Panc1 (cell line): ENCODE measurements at regions of chr7 and their contacts with region 1.

Region 1: GRCh38 chr7:100705753-100706671 is at the start of gene POP7:
- DNase-seq: peak; percentile 92
- ATAC-seq: peak; percentile 98
- H3K4me3 ChIP-seq: peak within 1 kb of the TSS; percentile 83 to 86
- H3K27ac ChIP-seq: peak within 1 kb of the TSS; percentile 84
- H3K4me1 ChIP-seq: peaks cover 13% of the 10 kb centered on the region; the same call in 1 of the 2 replicates
- H3K27me3 ChIP-seq: no peaks in the 10 kb centered on the region
- CTCF ChIP-seq: no peak
- total RNA-seq, gene POP7: 52.3 TPM

Region 2: GRCh38 chr7:100632951-100633717 is 72.9 kb before region 1 on chr7:
- CTCF ChIA-PET with region 1: interaction called, 12 read pairs
- POLR2A ChIA-PET with region 1: no interaction called
- in situ Hi-C with region 1: no loop called
- intact Hi-C with region 1: no loop called
- DNase-seq: no peak
- ATAC-seq: peak; percentile 85
- H3K4me3 ChIP-seq: peak overlapping the region; percentile 59 to 62
- H3K27ac ChIP-seq: peak overlapping the region; percentile 76
- H3K4me1 ChIP-seq: no peaks in the 10 kb centered on the region
- H3K27me3 ChIP-seq: no peaks in the 10 kb centered on the region
- CTCF ChIP-seq: peak; percentile 74

Region 3: GRCh38 chr7:100692578-100692961 is 13.4 kb before region 1 on chr7:
- CTCF ChIA-PET with region 1: interaction called, 10 read pairs
- POLR2A ChIA-PET with region 1: interaction called, 7 read pairs
- in situ Hi-C with region 1: no loop called
- intact Hi-C with region 1: no loop called
- DNase-seq: no peak
- ATAC-seq: no peak
- H3K4me3 ChIP-seq: peak overlapping the region; percentile 84 to 91
- H3K27ac ChIP-seq: peak overlapping the region; percentile 94
- H3K4me1 ChIP-seq: peaks cover 24% of the 10 kb centered on the region
- H3K27me3 ChIP-seq: no peaks in the 10 kb centered on the region
- CTCF ChIP-seq: no peak

Region 4: GRCh38 chr7:100726996-100727761 is 21.2 kb after region 1 on chr7:
- CTCF ChIA-PET with region 1: interaction called, 23 read pairs
- POLR2A ChIA-PET with region 1: no interaction called
- in situ Hi-C with region 1: no loop called
- intact Hi-C with region 1: no loop called
- DNase-seq: peak; percentile 22
- ATAC-seq: no peak
- H3K4me3 ChIP-seq: no peak overlapping the region
- H3K27ac ChIP-seq: no peak overlapping the region
- H3K4me1 ChIP-seq: 0 out of 2 replicates have a peak, but pooled peaks cover 8% of the 10 kb centered on the region
- H3K27me3 ChIP-seq: no peaks in the 10 kb centered on the region
- CTCF ChIP-seq: no peak

Region 5: DNA sequence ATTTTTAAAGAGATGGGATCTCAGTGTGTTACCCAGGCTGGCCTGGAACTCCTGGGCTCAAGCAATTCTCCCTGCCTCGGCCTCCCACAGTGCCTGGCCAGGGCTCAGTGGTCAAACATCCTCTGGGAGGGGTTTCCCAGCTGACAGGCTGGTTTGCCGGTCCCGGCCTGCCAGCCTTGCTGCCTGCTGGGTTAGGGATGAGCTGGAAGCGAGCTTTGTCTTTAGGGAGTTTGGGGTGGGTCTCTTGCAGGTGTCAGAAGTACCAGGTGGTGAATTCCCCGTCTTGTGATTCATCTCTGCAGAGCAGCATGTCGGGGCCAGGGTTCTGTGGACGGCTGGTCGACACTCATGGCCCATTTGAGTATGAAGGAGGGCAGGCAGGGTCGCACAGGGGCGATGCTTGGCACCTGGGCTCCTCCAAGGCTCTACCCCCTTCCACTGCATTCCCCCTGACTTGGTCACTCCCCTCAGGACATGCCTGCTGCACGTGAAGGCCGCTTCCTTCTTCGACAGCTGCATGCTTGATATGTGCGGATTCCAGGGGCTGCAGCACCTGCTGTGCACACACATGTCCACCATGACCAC is 57.6 kb after region 1 on chr7:
- CTCF ChIA-PET with region 1: no interaction called
- POLR2A ChIA-PET with region 1: no interaction called
- in situ Hi-C with region 1: no loop called
- intact Hi-C with region 1: no loop called
- DNase-seq: no peak
- ATAC-seq: no peak
- H3K4me3 ChIP-seq: no peak overlapping the region
- H3K27ac ChIP-seq: no peak overlapping the region
- H3K4me1 ChIP-seq: no peaks in the 10 kb centered on the region
- H3K27me3 ChIP-seq: no peaks in the 10 kb centered on the region
- CTCF ChIP-seq: no peak

Region 6: DNA sequence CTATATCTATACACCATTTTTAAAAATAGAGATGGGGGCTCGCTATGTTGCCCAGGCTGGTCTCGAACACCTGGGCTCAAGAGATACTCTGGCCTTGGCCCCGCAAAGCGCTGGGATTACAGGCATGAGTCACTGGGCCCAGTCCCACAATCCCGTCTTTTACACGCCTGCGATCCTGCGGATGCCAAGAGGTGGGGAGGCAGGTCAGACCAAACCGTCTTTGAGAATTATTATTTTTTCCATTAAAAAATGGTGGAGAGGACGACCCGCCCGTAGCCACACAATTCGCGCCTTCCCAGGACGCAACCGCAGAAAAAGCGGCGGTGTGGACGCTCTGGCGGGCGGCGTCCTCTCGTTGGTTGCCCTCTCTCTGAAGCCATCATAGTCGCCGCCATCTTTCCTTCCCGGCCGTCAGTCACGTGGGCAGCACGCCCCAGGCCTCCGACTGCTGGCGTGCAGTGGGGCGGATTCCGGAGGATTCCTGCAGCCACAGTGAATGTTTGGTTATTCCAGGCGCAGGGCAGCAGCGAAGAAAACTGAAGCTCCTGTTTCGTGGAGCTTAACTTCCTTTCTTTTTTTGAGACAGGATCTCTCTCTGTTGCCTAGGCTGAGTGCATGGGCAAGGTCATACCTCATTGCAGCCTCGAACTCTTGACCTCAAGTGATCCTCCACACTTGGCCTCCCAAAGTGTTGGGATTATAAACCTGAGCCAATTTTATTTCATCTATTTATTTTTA is 131.3 kb after region 1 on chr7:
- CTCF ChIA-PET with region 1: no interaction called
- POLR2A ChIA-PET with region 1: no interaction called
- in situ Hi-C with region 1: loop called (anchors 25 kb)
- intact Hi-C with region 1: no loop called
- DNase-seq: no peak
- ATAC-seq: no peak
- H3K4me3 ChIP-seq: no peak overlapping the region
- H3K27ac ChIP-seq: no peak overlapping the region
- H3K4me1 ChIP-seq: peaks cover 10% of the 10 kb centered on the region
- H3K27me3 ChIP-seq: no peaks in the 10 kb centered on the region
- CTCF ChIP-seq: no peak

Region 7: DNA sequence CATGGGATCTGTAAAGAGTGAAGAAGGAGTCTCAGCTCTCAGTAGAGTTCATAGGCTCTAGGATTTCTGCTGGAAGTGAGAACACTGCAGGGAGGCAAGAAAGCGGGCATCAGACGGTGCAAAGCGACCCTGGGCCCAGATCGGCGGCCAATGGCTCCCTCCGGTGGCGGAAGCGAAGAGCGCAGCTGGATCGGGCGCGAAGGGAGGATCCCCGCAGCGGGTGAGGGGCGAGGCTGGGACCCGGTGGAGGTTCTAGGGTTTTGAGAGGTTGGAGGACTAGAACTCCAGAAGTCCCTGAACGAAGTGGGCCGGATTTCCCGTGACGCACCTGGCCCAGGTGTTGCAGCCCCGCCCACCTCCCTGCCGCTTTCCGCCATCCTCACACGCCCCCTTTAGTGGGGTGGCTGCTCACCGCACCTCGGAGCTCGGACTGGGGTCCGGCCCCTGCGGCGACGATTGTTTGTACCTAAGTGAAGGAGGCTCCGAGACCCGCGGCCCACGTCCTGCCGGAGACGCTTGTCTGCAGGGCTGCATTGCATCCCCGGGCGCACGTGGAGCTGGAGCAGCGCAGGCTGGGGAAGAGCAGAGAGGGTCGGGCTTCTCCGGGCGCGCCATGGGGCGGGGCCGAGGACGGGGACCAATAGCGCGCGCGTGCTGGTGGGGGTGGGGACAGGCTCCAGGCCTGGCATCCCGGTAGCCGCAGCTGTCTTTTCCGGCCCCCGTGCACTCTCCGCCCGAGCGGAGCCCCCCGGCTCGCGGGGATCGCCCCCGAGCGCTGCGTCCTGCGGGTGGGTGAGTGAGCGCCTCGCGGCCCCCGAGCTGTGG is 146.2 kb after region 1 on chr7 and contains the start of gene SLC12A9:
- CTCF ChIA-PET with region 1: interaction called, 19 read pairs
- POLR2A ChIA-PET with region 1: no interaction called
- in situ Hi-C with region 1: loop called (anchors 25 kb)
- intact Hi-C with region 1: loop called (anchors 1 kb)
- DNase-seq: peak; percentile 45
- ATAC-seq: peak; percentile 99
- H3K4me3 ChIP-seq: peak within 1 kb of the TSS; percentile 80
- H3K27ac ChIP-seq: peak within 1 kb of the TSS; percentile 74
- H3K4me1 ChIP-seq: peaks cover 3% of the 10 kb centered on the region; the same call in 1 of the 2 replicates
- H3K27me3 ChIP-seq: no peaks in the 10 kb centered on the region
- CTCF ChIP-seq: peak; percentile 95
- total RNA-seq, gene SLC12A9: 31.1 TPM